ENCODE measurements at regions of chr12 and their contacts with region 1.

Region 1: DNA sequence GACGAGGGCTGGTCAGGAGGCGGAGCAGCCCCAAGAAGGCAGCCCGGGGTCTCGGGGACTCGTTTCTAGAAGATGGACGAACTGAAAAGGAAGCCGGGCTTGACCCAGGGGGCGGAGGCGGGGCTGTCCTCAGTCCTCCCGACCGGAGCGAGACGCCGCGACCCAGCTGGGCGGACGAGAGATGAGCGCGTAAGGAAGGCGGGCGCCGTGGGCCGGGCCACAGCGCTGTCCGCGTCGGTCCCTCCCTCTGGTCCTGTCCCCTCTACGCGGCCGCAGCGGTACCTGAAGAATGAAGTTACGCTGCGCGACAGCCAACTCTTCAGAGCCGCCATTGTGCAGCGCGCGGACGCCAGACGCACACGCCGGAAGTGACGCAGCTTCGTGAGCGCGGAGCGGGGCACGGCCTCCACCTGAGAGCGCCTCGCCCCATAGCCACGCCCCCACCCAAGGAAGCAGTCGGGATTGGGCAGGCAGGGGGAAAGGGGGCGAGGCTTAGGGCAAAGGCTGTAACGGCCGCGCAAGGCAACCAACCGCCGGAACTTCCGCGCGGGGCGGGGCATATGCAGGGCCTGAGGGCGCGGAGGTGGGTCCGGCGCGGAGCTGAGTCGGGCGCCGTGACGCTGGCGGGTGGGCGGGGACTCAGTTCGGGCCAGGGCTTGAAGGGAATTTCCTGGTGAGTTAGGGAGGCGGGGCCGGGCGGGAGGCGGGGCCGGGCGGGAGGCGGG is at the start of gene DIABLO:
- DNase-seq: peak; percentile 99 to 100 (median 100)
- ATAC-seq: peak; percentile 91
- H3K4me3 ChIP-seq: peak within 1 kb of the TSS; percentile 79 to 91
- H3K4me3 Mint-ChIP-seq: peak within 1 kb of the TSS; percentile 86
- H3K27ac ChIP-seq: peak within 1 kb of the TSS; percentile 97 to 98
- H3K27ac Mint-ChIP-seq: peak within 1 kb of the TSS; percentile 92
- H3K4me1 ChIP-seq: peaks cover 41% of the 10 kb centered on the region
- H3K4me1 Mint-ChIP-seq: peaks cover 52% of the 10 kb centered on the region
- H3K27me3 ChIP-seq: no peaks in the 10 kb centered on the region
- H3K27me3 Mint-ChIP-seq: no peaks in the 10 kb centered on the region
- CTCF ChIP-seq: no peak
- total RNA-seq, gene DIABLO: 104 to 112 TPM

Region 2: DNA sequence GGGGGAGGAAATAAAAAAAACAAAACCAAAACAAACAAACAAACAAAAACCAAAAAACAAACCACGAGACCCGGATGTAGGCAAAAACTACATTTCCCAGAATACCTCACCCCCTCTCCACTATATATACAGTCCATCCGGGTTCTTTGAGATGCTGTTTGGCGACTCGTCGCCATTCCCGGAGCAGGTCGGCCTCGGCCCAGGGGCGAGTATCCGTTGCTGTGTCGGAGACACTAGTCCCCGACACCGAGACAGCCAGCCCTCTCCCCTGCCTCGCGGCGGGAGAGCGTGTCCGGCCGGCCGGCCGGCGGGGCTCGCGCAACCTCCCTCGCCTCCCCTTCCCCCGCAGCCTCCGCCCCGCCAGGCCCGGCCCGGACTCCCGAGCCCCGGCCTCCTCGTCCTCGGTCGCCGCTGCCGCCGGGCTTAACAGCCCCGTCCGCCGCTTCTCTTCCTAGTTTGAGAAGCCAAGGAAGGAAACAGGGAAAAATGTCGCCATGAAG is 1691.6 kb before region 1 on chr12 and contains the start of gene RNF10:
- CTCF ChIA-PET with region 1: no interaction called
- POLR2A ChIA-PET with region 1: no interaction called
- intact Hi-C with region 1: loop called in 1 of 2 experiments (anchors 5 kb)
- DNase-seq: peak; percentile 48 to 92 (median 73)
- ATAC-seq: peak; percentile 69
- H3K4me3 ChIP-seq: peak within 1 kb of the TSS; percentile 89 to 95
- H3K4me3 Mint-ChIP-seq: peak within 1 kb of the TSS; percentile 96
- H3K27ac ChIP-seq: peak within 1 kb of the TSS; percentile 76 to 83
- H3K27ac Mint-ChIP-seq: peak within 1 kb of the TSS; percentile 95
- H3K4me1 ChIP-seq: peaks cover 38% of the 10 kb centered on the region
- H3K4me1 Mint-ChIP-seq: peaks cover 57% of the 10 kb centered on the region
- H3K27me3 ChIP-seq: no peaks in the 10 kb centered on the region
- H3K27me3 Mint-ChIP-seq: no peaks in the 10 kb centered on the region
- CTCF ChIP-seq: no peak
- total RNA-seq, gene RNF10: 402 to 410 TPM

Region 3: GRCh38 chr12:121888478-121889266 is 337.2 kb before region 1 on chr12 and contains the start of gene PSMD9:
- CTCF ChIA-PET with region 1: no interaction called
- POLR2A ChIA-PET with region 1: interaction called, 3 read pairs
- intact Hi-C with region 1: loop called in 1 of 2 experiments (anchors 1 kb)
- DNase-seq: peak; percentile 96 to 99 (median 99)
- ATAC-seq: peak; percentile 93
- H3K4me3 ChIP-seq: peak within 1 kb of the TSS; percentile 72 to 80
- H3K4me3 Mint-ChIP-seq: peak within 1 kb of the TSS; percentile 99
- H3K27ac ChIP-seq: peak within 1 kb of the TSS; percentile 88 to 92
- H3K27ac Mint-ChIP-seq: peak within 1 kb of the TSS; percentile 99
- H3K4me1 ChIP-seq: peaks cover 32% of the 10 kb centered on the region
- H3K4me1 Mint-ChIP-seq: peaks cover 35% of the 10 kb centered on the region
- H3K27me3 ChIP-seq: no peaks in the 10 kb centered on the region
- H3K27me3 Mint-ChIP-seq: no peaks in the 10 kb centered on the region
- CTCF ChIP-seq: peak; percentile 27
- total RNA-seq, gene PSMD9: 38.7 to 42.2 TPM

Region 4: GRCh38 chr12:122174155-122174845 is 51.5 kb before region 1 on chr12 and contains the start of gene IL31:
- CTCF ChIA-PET with region 1: no interaction called
- POLR2A ChIA-PET with region 1: no interaction called
- intact Hi-C with region 1: no loop called
- DNase-seq: no peak
- ATAC-seq: no peak
- H3K4me3 ChIP-seq: no peak within 1 kb of the TSS
- H3K4me3 Mint-ChIP-seq: no peak within 1 kb of the TSS
- H3K27ac ChIP-seq: no peak within 1 kb of the TSS
- H3K27ac Mint-ChIP-seq: no peak within 1 kb of the TSS
- H3K4me1 ChIP-seq: no peaks in the 10 kb centered on the region
- H3K4me1 Mint-ChIP-seq: no peaks in the 10 kb centered on the region
- H3K27me3 ChIP-seq: no peaks in the 10 kb centered on the region
- H3K27me3 Mint-ChIP-seq: no peaks in the 10 kb centered on the region
- CTCF ChIP-seq: no peak
- total RNA-seq, gene IL31: not detected

Region 5: DNA sequence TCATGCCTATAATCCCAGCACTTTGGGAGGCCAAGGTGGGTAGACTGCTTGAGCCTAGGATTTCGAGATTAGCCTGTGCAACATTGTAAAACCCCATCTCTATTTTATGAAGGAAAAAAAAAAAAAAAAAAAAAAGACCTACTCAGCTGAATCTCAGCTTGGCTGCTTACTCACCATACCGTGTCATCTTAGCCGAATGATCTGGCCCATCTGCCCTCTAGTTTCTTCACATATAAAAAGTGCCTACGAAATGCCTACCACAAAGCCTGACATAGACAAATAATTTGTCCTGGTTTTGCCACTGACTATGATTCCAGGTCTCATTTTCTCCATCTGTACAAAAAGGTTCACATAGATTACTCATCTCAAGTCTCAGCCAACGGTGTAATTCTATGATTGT is 10.1 kb before region 1 on chr12:
- CTCF ChIA-PET with region 1: interaction called, 3 read pairs
- POLR2A ChIA-PET with region 1: interaction called, 11 read pairs
- intact Hi-C with region 1: no loop called
- DNase-seq: no peak
- ATAC-seq: no peak
- H3K4me3 ChIP-seq: no peak overlapping the region
- H3K4me3 Mint-ChIP-seq: no peak overlapping the region
- H3K27ac ChIP-seq: no peak overlapping the region
- H3K27ac Mint-ChIP-seq: no peak overlapping the region
- H3K4me1 ChIP-seq: peaks cover 4% of the 10 kb centered on the region
- H3K4me1 Mint-ChIP-seq: peaks cover 4% of the 10 kb centered on the region
- H3K27me3 ChIP-seq: no peaks in the 10 kb centered on the region
- H3K27me3 Mint-ChIP-seq: no peaks in the 10 kb centered on the region
- CTCF ChIP-seq: no peak

Region 6: GRCh38 chr12:122500685-122501488 is 275.0 kb after region 1 on chr12 and contains the start of gene ZCCHC8:
- CTCF ChIA-PET with region 1: no interaction called
- POLR2A ChIA-PET with region 1: no interaction called
- intact Hi-C with region 1: loop called (anchors 2 to 5 kb)
- DNase-seq: peak; percentile 92 to 98 (median 96)
- ATAC-seq: peak; percentile 92
- H3K4me3 ChIP-seq: peak within 1 kb of the TSS; percentile 74 to 80
- H3K4me3 Mint-ChIP-seq: peak within 1 kb of the TSS; percentile 97
- H3K27ac ChIP-seq: peak within 1 kb of the TSS; percentile 90 to 92
- H3K27ac Mint-ChIP-seq: peak within 1 kb of the TSS; percentile 99
- H3K4me1 ChIP-seq: peaks cover 17% of the 10 kb centered on the region
- H3K4me1 Mint-ChIP-seq: peaks cover 40% of the 10 kb centered on the region
- H3K27me3 ChIP-seq: no peaks in the 10 kb centered on the region
- H3K27me3 Mint-ChIP-seq: no peaks in the 10 kb centered on the region
- CTCF ChIP-seq: no peak
- total RNA-seq, gene ZCCHC8: 53.4 to 55.6 TPM

Region 7: GRCh38 chr12:122974274-122974891 is 748.5 kb after region 1 on chr12:
- CTCF ChIA-PET with region 1: no interaction called
- POLR2A ChIA-PET with region 1: no interaction called
- intact Hi-C with region 1: loop called in 1 of 2 experiments (anchors 5 kb)
- DNase-seq: peak; percentile 97 to 100 (median 99)
- ATAC-seq: peak; percentile 85
- H3K4me3 ChIP-seq: peak overlapping the region; percentile 91 to 93
- H3K4me3 Mint-ChIP-seq: peak overlapping the region; percentile 98
- H3K27ac ChIP-seq: peak overlapping the region; percentile 93 to 97
- H3K27ac Mint-ChIP-seq: peak overlapping the region; percentile 98
- H3K4me1 ChIP-seq: peaks cover 26% of the 10 kb centered on the region
- H3K4me1 Mint-ChIP-seq: peaks cover 31% of the 10 kb centered on the region
- H3K27me3 ChIP-seq: no peaks in the 10 kb centered on the region
- H3K27me3 Mint-ChIP-seq: no peaks in the 10 kb centered on the region
- CTCF ChIP-seq: no peak

Measured in CD8-positive, alpha-beta T cell (primary cell).